Activated CD4-positive, alpha-beta T cell treated with anti-CD3 and anti-CD28 coated beads for 36 hours (primary cell): ENCODE measurements at regions of chr17 and their contacts with region 1.

Region 1: DNA sequence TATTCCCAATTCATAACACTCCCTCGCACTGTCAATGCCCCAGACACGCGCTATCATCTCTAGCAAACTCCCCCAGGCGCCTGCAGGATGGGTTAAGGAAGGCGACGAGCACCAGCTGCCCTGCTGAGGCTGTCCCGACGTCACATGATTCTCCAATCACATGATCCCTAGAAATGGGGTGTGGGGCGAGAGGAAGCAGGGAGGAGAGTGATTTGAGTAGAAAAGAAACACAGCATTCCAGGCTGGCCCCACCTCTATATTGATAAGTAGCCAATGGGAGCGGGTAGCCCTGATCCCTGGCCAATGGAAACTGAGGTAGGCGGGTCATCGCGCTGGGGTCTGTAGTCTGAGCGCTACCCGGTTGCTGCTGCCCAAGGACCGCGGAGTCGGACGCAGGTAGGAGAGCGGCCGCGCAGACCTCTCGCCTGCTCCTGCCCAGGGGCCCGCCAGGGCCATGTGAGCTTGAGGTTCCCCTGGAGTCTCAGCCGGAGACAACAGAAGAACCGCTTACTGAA is at the start of gene GRN:
- DNase-seq: peak; percentile 92
- ATAC-seq: peak; percentile 99
- H3K4me3 Mint-ChIP-seq: peak within 1 kb of the TSS; percentile 87
- H3K27ac Mint-ChIP-seq: peak within 1 kb of the TSS; percentile 80
- H3K4me1 Mint-ChIP-seq: peaks cover 11% of the 10 kb centered on the region
- H3K27me3 Mint-ChIP-seq: no peaks in the 10 kb centered on the region
- total RNA-seq, gene GRN: 35.4 to 68.0 TPM

Region 2: GRCh38 chr17:44006598-44007345 is 338.2 kb before region 1 on chr17:
- CTCF ChIA-PET with region 1: no interaction called
- POLR2A ChIA-PET with region 1: no interaction called
- intact Hi-C with region 1: loop called in 1 of 2 experiments (anchors 2 kb)
- DNase-seq: peak; percentile 99
- ATAC-seq: peak; percentile 84
- H3K4me3 Mint-ChIP-seq: peak overlapping the region; percentile 78
- H3K27ac Mint-ChIP-seq: peak overlapping the region; percentile 86
- H3K4me1 Mint-ChIP-seq: peaks cover 20% of the 10 kb centered on the region
- H3K27me3 Mint-ChIP-seq: peaks cover 17% of the 10 kb centered on the region

Region 3: DNA sequence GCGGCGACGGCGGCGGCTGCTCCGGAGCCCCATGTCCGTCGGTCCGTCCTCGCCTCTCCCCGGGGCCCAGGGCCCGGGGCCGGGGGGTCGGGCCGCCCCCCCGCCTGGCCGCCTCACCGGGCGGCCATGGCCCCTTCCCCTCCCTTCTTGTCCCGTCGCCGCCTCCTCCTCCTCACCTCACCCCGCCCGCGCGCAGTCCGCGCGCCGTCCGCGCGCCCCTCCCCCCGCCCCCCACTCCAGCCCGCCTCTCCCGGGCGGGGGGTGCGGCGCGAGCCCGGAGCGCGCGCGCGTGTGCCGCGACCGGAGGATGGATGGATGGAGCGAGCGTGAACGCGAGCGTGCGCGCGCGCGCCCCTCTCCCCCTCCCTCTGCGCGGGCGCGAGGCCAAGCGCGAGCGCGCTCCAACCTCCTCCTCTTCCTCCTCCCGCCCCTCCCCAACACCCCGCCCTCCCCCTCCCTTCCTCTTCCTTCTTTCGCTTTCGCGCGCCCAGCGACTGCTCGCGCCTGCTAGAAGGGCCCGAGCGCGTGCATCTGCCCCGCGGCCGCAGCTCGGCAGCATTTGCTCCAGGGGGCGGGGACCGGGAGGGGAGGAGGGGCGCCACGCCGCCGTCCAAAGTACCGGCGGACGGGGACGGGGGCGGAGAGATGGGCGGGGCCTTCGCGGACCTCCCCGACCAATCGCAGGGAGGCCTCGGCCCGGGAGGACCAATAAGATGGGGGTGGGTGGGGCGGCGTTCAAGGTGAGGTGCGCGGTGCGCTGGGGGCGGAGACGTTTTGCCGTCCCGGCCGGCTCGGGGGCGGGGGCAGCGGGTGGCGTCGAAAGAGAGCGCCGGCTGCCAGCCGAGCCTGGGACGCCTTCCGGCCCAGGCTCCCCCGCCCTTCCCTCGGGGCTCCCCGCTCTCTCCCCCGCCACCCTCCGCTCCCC is 145.2 kb before region 1 on chr17 and contains the start of gene ATXN7L3:
- CTCF ChIA-PET with region 1: interaction called, 7 read pairs
- POLR2A ChIA-PET with region 1: no interaction called
- intact Hi-C with region 1: loop called in 1 of 2 experiments (anchors 1 kb)
- DNase-seq: peak; percentile 100
- ATAC-seq: peak; percentile 84
- H3K4me3 Mint-ChIP-seq: peak within 1 kb of the TSS; percentile 88
- H3K27ac Mint-ChIP-seq: peak within 1 kb of the TSS; percentile 94
- H3K4me1 Mint-ChIP-seq: peaks cover 38% of the 10 kb centered on the region
- H3K27me3 Mint-ChIP-seq: no peaks in the 10 kb centered on the region
- total RNA-seq, gene ATXN7L3: 66.3 to 70.6 TPM

Region 4: GRCh38 chr17:44308320-44308818 is 36.6 kb before region 1 on chr17 and contains the start of gene RUNDC3A:
- CTCF ChIA-PET with region 1: interaction called, 3 read pairs
- POLR2A ChIA-PET with region 1: no interaction called
- intact Hi-C with region 1: loop called in 1 of 2 experiments (anchors 1 kb)
- DNase-seq: peak; percentile 91
- ATAC-seq: peak; percentile 91
- H3K4me3 Mint-ChIP-seq: no peak within 1 kb of the TSS
- H3K27ac Mint-ChIP-seq: no peak within 1 kb of the TSS
- H3K4me1 Mint-ChIP-seq: peaks cover 5% of the 10 kb centered on the region
- H3K27me3 Mint-ChIP-seq: peaks cover 28% of the 10 kb centered on the region
- total RNA-seq, gene RUNDC3A: 0.11 TPM in 1 of 2 experiments, not detected in the other

Region 5: DNA sequence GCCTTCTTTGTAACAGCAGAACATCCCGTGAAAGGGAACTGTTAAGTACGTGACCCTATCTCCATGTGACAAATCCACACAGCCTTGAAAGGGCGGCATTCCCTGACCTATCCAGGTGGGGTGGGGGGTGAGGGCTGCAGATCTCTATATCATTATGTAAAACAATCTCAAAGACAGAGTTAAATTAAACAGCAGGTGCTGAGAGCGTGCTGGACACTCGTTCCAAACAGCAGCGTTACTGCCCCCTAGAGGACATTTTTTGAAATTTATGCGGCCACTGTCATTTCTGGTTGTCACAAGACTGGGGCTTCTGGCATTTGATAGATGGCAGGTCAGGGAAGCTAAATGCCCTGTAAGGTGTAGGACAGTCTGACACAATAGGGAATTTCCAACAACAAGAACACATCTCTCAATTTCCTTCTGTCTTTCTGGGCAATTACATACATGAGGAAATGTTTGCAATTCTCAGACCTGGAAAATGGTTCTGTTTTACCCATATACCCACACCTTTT is 13.7 kb before region 1 on chr17:
- CTCF ChIA-PET with region 1: interaction called, 40 read pairs
- POLR2A ChIA-PET with region 1: interaction called, 4 read pairs
- intact Hi-C with region 1: loop called in 1 of 2 experiments (anchors 1 kb)
- DNase-seq: peak; percentile 82
- ATAC-seq: peak; percentile 64
- H3K4me3 Mint-ChIP-seq: no peak overlapping the region
- H3K27ac Mint-ChIP-seq: no peak overlapping the region
- H3K4me1 Mint-ChIP-seq: peaks cover 12% of the 10 kb centered on the region
- H3K27me3 Mint-ChIP-seq: no peaks in the 10 kb centered on the region

Region 6: GRCh38 chr17:44385287-44386181 is 40.5 kb after region 1 on chr17:
- CTCF ChIA-PET with region 1: interaction called, 3 read pairs
- POLR2A ChIA-PET with region 1: no interaction called
- intact Hi-C with region 1: loop called in 1 of 2 experiments (anchors 1 kb)
- DNase-seq: peak; percentile 96
- ATAC-seq: peak; percentile 96
- H3K4me3 Mint-ChIP-seq: peak overlapping the region; percentile 62
- H3K27ac Mint-ChIP-seq: peak overlapping the region; percentile 21
- H3K4me1 Mint-ChIP-seq: peaks cover 12% of the 10 kb centered on the region
- H3K27me3 Mint-ChIP-seq: peaks cover 22% of the 10 kb centered on the region

Region 7: DNA sequence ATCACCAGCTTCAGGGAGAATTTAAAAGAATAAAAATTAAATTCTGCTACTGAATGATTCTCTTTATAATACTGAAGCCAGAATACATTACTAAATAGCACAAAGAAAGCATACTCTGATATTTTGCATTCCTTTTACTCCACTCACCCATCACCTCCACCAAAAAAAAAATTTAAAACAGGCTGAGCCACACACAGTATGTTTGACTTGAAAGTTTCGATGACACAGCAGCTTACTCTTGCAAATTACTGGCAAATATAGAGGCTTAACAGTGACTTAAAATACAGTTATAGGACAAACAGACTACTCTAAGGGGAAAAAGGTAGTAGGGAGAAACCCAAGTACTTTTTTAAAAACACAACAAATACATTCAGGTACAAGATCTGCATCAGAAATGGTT is 119.0 kb after region 1 on chr17:
- CTCF ChIA-PET with region 1: no interaction called
- POLR2A ChIA-PET with region 1: no interaction called
- intact Hi-C with region 1: no loop called
- DNase-seq: no peak
- ATAC-seq: no peak
- H3K4me3 Mint-ChIP-seq: no peak overlapping the region
- H3K27ac Mint-ChIP-seq: peak overlapping the region; percentile 1
- H3K4me1 Mint-ChIP-seq: peaks cover 29% of the 10 kb centered on the region
- H3K27me3 Mint-ChIP-seq: no peaks in the 10 kb centered on the region